ENCODE measurements at regions of chr4 and their contacts with region 1.

Region 1: DNA sequence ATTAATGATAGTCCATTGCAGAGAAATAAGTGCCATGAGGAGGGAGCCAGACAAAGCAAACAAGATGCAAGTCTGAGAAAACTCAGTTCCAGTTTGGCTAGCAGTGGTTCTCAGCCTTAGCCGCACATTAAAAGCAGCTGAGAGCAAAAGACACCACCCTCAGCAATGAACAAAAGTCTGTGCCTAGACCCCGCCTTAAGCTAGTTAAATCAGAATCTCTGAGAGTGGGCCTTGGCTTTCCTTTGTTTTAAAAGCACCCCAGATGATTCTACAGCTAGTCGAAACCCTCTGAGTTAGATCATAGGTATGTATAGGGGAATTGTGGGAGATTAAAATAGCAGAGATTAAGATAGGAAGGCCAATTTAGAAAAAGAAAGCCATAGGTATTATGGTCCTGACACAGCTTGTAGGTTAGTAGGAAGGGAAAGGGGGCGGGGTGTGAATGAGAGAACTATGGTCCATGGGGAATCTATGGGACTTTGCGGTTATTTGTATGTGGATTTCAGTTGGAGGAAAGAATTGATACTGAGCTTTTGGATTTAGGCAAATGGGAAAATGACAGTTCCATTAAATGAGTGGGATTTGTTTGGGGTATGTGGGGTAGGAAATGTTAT is 12.0 kb downstream of the SPRY1 start:
- DNase-seq: no peak
- H3K4me3 ChIP-seq: no peak overlapping the region
- H3K27ac ChIP-seq: no peak overlapping the region
- H3K4me1 ChIP-seq: peaks cover 0 to 18% of the 10 kb centered on the region in 2 experiments; a peak in 3 of 4 replicates
- H3K27me3 ChIP-seq: no peaks in the 10 kb centered on the region
- CTCF ChIP-seq: no peak
- EP300 ChIP-seq: no peak
- RAD21 ChIP-seq: no peak

Region 2: DNA sequence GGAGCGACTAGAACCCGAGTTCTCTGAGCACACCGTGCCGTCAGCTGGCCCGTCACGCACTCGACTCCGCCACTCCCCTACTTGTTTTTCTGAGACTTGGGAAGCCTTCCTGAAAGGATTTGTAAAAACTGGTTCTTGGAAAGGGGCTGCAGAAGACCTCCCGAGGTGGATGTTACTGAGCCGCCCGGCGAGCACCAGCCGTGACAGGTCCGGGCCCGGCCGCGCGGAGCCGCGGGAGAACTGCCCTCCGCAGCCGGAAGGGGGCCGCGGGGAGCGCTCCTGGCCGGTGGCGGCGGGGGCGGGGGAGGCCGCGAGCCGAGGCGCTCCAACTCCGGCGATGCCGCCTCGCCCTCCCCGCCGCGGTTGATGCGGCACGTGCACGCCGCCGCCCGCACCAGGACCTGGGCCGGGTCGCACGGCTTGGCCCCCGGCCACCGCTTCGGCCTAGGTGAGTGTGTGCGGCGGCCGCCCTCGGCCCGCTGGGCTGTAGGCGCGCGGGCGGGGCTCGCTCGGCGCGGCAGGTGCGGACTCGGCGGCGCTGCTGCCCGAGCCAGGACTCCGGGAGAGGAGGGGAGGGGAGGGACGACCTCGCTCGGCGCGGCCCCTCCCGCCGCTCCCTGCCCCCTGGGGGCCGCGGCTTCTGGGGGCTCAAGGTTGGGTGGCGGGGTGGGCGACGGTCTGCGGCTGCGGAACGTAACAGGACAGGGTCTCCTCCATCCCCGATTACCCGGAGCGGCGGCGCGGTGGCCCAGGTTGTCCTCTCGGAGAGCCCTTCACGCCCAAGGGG is 10.3 kb before region 1 on chr4:
- CTCF ChIA-PET with region 1: interaction called, 12 read pairs
- POLR2A ChIA-PET with region 1: no interaction called
- DNase-seq: peak; percentile 89
- H3K4me3 ChIP-seq: peak overlapping the region; percentile 63 to 80
- H3K27ac ChIP-seq: peak overlapping the region; percentile 40 to 56
- H3K4me1 ChIP-seq: peaks cover 0 to 8% of the 10 kb centered on the region in 2 experiments; a peak in 2 of 4 replicates
- H3K27me3 ChIP-seq: no peaks in the 10 kb centered on the region
- CTCF ChIP-seq: peak; percentile 41
- EP300 ChIP-seq: no peak
- RAD21 ChIP-seq: peak; percentile 29

Measured in SK-N-SH (cell line).